Activated T-helper 1 cell treated with anti-CD3 and anti-CD28 coated beads, Interleukin-12 subunit alpha, Interleukin-12 subunit beta, Interleukin-2, Interleukin-4 antibody, amounts not matched to agents 30 ng/mL and 10 ng/mL and 1 ng/mL, durations not matched to agents 14 hours and 24 hours and 36 hours (primary cell): ENCODE measurements at regions of chr20 and their contacts with region 1.

Region 1: GRCh38 chr20:5402903-5403531 is 86.3 kb upstream of the PROKR2 start:
- DNase-seq: peak; percentile 1
- H3K4me3 Mint-ChIP-seq: no peak overlapping the region
- H3K27ac Mint-ChIP-seq: no peak overlapping the region
- H3K4me1 Mint-ChIP-seq: peaks cover 5% of the 10 kb centered on the region
- H3K27me3 Mint-ChIP-seq: peaks cover 4% of the 10 kb centered on the region

Region 2: DNA sequence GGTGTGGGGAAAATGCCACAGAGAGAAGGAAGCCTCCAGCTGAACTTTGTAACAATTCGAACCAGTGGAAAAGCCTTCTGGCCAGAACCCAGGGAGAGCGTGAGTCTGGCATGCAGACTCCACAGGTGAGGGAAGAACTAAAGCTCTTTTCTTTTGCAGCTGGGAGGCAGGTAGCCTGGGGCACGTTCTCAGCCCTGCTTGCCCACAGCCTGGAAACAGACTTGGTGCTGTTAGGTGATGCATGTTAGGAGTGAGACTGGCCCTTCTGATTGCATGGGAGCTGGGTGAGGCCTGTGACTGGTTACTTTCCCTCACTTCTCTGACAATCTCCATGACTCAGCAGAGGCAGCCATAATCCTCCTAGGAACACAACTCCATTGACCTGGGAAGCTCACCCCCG is 120.5 kb before region 1 on chr20:
- intact Hi-C with region 1: no loop called
- DNase-seq: no peak
- H3K4me3 Mint-ChIP-seq: no peak overlapping the region
- H3K27ac Mint-ChIP-seq: no peak overlapping the region
- H3K4me1 Mint-ChIP-seq: no peaks in the 10 kb centered on the region
- H3K27me3 Mint-ChIP-seq: peaks cover 4% of the 10 kb centered on the region

Region 3: GRCh38 chr20:5448449-5449118 is 45.6 kb after region 1 on chr20:
- intact Hi-C with region 1: loop called (anchors 1 kb)
- DNase-seq: peak; percentile 17
- H3K4me3 Mint-ChIP-seq: no peak overlapping the region
- H3K27ac Mint-ChIP-seq: no peak overlapping the region
- H3K4me1 Mint-ChIP-seq: no peaks in the 10 kb centered on the region
- H3K27me3 Mint-ChIP-seq: peaks cover 10% of the 10 kb centered on the region